Activated CD4-positive, alpha-beta T cell treated with anti-CD3 and anti-CD28 coated beads, Interleukin-2, amount 10 ng/mL, durations not matched to agents 24 days and 14 days (primary cell): ENCODE measurements at regions of chr9 and their contacts with region 1.

Region 1: DNA sequence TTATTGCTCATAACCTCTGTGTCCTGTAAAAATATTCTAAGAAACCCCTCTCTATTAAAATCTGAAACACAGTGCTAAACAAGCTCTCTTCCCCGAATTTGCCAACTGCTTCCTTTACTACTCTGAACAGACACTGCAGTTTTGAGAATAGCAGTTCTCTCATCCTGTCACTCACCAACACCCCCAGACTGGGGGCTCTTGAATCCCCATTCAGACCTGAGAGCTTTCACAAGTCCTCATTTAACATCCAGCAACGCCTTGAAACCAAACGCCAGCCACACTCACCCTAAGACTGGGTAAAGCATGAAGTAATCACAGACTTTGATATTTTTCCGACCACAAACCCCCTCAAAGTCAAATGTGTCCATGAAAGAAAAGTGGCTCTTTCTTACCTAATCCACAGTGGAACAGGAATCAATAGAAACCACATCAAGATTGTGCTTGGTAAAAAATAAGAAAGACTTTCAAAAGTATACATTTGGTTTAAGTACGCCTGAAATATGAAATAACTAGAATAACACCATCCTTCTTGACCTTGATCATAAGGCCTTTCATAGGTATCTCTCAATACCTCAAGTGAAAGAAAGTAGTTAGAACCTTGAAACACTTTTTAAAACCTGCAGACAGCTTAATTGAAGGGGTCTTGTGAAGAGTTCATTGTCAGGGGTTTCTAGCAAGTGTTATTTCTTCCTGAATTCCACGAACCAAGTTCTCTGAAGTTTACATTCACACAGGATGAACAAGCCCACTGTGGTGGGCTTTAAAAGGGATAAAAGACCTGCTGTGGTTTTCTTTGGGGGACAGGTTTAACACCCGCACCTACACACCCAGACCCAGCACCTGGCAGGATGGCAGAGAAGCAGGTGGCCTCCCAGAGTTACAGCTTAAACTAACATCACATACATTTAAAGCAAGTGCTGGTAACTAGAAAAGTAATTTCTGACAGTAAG is 412.6 kb downstream of the MLLT3 start:
- DNase-seq: peak; percentile 89
- H3K4me3 Mint-ChIP-seq: peak overlapping the region; percentile 57
- H3K27ac Mint-ChIP-seq: peak overlapping the region; percentile 95
- H3K4me1 Mint-ChIP-seq: peaks cover 36% of the 10 kb centered on the region
- H3K27me3 Mint-ChIP-seq: no peaks in the 10 kb centered on the region

Region 2: DNA sequence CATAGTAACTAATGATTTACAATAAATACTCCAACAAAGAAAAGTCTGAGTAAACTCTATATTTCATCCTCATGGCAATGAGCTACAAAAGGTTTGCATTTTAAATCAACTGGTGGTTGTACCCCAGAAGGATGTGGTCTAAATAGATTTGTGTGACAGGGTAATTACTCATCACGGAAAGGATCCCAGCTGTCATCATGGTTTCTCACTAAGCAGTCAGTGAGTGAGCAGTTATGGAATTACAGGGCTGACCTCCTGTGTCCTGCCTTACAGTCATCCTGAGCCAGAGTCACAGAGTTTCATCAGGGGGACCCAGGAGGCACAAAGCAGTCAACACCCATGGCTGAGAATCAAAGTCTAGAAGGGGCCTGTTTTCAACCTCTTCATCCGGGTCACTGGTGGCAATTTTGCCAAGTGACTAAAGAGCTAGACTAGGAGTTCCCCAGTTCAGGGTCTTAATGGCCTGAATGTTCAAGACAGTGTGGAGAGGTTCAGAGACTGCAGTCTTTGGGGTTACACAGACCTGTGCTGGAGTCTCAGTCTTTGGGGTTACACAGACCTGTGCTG is 210.1 kb before region 1 on chr9:
- intact Hi-C with region 1: loop called (anchors 1 kb)
- DNase-seq: peak; percentile 88
- H3K4me3 Mint-ChIP-seq: peak overlapping the region; percentile 74
- H3K27ac Mint-ChIP-seq: peak overlapping the region; percentile 99
- H3K4me1 Mint-ChIP-seq: peaks cover 53% of the 10 kb centered on the region
- H3K27me3 Mint-ChIP-seq: no peaks in the 10 kb centered on the region

Region 3: DNA sequence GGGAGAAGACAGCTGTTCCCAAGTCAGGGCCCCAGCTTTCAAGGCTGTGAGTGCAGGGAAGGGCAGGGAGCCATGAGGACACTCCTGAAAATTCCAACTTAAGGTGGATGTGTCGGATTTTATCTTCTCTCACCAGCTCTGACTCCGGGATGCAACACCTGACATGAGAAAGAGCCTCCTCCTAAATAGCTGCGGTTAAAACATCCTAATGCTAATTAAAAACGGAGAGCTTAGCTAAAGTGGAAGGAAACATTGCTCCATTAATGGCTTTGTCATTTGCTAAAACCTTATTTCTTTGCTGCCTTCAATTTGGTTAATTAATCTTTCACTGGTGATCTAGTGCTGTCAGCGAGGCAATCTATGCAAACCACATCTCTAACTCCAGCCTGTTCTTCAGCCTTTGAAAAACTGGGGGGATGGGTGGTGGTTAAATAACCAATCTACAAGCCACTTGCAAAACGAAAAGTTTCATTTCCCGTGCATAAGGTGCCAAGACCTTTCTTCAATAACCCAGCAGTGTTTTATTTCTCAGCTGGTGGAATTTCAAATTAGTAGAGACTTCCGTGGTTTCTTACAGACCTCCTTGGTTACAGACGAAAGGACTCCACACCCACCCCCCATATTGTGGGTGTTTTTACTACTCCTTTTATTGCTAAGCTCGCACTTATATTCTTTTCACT is 33.0 kb after region 1 on chr9:
- intact Hi-C with region 1: loop called (anchors 1 kb)
- DNase-seq: peak; percentile 88
- H3K4me3 Mint-ChIP-seq: peak overlapping the region; percentile 77
- H3K27ac Mint-ChIP-seq: peak overlapping the region; percentile 61
- H3K4me1 Mint-ChIP-seq: peaks cover 58% of the 10 kb centered on the region
- H3K27me3 Mint-ChIP-seq: no peaks in the 10 kb centered on the region

Region 4: GRCh38 chr9:20307621-20308020 is 98.0 kb after region 1 on chr9:
- intact Hi-C with region 1: no loop called
- DNase-seq: no peak
- H3K4me3 Mint-ChIP-seq: no peak overlapping the region
- H3K27ac Mint-ChIP-seq: no peak overlapping the region
- H3K4me1 Mint-ChIP-seq: peaks cover 7% of the 10 kb centered on the region
- H3K27me3 Mint-ChIP-seq: no peaks in the 10 kb centered on the region

Region 5: GRCh38 chr9:20331095-20331685 is 121.5 kb after region 1 on chr9:
- intact Hi-C with region 1: loop called (anchors 1 kb)
- DNase-seq: no peak
- H3K4me3 Mint-ChIP-seq: peak overlapping the region; percentile 21
- H3K27ac Mint-ChIP-seq: peak overlapping the region; percentile 40
- H3K4me1 Mint-ChIP-seq: peaks cover 23% of the 10 kb centered on the region
- H3K27me3 Mint-ChIP-seq: no peaks in the 10 kb centered on the region

Region 6: DNA sequence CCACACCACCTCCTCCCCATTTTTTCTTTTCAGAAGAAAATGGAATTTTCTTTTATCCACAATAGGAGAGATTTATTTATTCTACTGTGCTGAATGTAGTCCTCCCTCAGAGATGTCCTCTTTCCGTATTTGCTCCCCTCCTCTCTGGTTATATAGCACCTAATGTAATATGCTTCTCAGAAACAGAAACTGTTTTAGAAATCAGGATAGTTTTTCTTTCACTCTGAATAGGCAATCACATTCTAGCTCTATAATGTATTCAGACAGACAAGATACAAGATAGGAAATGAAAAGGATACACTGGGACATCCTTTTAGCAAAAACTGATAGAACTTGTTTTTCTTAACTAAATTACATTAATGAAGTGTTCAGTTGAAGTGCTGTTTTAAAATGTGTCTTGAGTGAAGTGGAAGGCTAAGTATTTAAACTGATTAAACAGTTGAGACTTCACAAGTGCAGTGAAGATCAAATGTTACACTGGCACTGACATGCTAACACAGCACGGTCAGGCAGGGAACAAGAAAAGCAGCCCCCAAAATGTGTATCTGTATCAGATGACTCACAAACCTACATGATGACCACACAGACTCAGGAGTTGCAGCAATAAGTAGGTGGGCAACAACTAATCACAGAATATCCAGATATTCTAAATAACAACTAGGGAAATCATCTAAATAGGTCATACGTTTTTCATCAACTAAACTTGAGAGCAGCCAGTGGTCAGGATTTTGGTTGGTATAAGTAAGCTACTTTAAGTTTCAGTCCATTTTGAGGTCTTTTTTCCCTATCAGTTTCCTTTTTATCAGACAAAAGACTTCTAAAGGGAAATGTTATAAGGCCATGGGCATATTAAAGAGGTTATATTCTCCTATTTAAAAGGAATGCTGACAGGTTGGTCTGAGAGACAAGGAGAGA is 152.2 kb after region 1 on chr9:
- intact Hi-C with region 1: no loop called
- DNase-seq: no peak
- H3K4me3 Mint-ChIP-seq: peak overlapping the region; percentile 66
- H3K27ac Mint-ChIP-seq: peak overlapping the region; percentile 56
- H3K4me1 Mint-ChIP-seq: peaks cover 54% of the 10 kb centered on the region
- H3K27me3 Mint-ChIP-seq: no peaks in the 10 kb centered on the region

Region 7: DNA sequence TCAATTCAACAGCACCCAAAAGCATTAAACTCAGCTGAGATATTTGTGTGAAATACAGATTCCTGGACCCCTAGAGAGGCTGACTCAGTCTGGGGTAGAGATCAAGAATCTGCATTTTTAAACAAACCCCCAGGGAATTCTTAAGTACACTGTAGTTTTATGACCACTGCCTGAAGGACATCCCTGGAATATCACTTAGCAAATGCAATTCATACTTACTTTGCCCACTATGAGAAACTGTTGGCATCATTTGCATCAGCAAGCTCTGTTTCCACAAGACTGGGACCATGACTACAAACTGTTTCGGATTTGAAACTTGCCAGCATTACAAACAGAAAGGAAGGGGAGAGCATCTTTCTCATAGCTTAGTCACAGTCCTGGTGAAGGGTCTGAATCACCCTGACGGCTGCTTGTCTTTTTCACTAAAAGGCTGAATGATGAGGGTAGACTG is 348.9 kb after region 1 on chr9:
- intact Hi-C with region 1: loop called (anchors 1 kb)
- DNase-seq: peak; percentile 76
- H3K4me3 Mint-ChIP-seq: peak overlapping the region; percentile 24
- H3K27ac Mint-ChIP-seq: peak overlapping the region; percentile 77
- H3K4me1 Mint-ChIP-seq: peaks cover 77% of the 10 kb centered on the region
- H3K27me3 Mint-ChIP-seq: no peaks in the 10 kb centered on the region

Region 8: DNA sequence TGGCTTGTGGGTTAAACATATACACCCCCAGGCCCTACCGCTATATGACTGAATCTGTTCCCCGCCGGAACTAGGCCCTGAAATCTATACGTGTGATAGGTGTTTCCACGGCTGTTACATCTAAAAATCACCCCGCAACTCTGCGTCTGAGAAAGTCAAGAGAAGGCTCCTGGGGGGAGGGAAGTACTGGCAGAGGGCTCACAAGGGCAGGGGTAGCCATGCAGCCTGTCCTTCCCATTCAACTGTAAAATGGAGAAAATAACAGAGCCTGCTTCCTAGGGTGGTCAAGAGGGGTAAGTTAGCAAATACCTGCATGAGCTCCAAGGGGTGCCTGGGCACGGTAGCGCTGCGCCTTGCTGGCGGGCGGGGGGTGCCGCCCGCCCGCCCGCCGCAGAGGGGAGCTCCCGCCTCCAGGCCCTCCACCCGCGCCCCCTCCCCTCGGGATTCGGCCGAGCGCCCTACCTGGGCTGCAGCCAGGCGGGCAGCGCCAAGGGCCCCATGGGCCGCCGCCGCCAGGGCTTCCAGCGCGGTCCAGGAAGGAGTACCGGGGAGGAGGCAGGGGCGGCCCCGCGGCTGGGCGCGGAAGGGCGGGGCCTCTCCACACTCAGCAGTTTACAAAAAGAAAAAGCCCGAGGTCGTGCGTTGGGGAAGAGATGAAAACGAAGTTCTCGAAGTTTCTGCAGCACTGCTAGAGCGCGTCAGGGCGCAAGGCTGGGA is 821.6 kb after region 1 on chr9 and contains the start of gene HACD4:
- intact Hi-C with region 1: loop called (anchors 1 kb)
- DNase-seq: peak; percentile 92
- H3K4me3 Mint-ChIP-seq: peak within 1 kb of the TSS; percentile 69
- H3K27ac Mint-ChIP-seq: peak within 1 kb of the TSS; percentile 78
- H3K4me1 Mint-ChIP-seq: peaks cover 11% of the 10 kb centered on the region
- H3K27me3 Mint-ChIP-seq: peaks cover 3% of the 10 kb centered on the region
- total RNA-seq, gene HACD4: 2.8 and 3.0 TPM in 2 replicates